Activated CD4-positive, alpha-beta memory T cell treated with anti-CD3 and anti-CD28 coated beads, Interleukin-2, amount 10 ng/mL, durations not matched to agents 7 days and 5 days (primary cell): ENCODE measurements at regions of chr7 and their contacts with region 1.

Region 1: DNA sequence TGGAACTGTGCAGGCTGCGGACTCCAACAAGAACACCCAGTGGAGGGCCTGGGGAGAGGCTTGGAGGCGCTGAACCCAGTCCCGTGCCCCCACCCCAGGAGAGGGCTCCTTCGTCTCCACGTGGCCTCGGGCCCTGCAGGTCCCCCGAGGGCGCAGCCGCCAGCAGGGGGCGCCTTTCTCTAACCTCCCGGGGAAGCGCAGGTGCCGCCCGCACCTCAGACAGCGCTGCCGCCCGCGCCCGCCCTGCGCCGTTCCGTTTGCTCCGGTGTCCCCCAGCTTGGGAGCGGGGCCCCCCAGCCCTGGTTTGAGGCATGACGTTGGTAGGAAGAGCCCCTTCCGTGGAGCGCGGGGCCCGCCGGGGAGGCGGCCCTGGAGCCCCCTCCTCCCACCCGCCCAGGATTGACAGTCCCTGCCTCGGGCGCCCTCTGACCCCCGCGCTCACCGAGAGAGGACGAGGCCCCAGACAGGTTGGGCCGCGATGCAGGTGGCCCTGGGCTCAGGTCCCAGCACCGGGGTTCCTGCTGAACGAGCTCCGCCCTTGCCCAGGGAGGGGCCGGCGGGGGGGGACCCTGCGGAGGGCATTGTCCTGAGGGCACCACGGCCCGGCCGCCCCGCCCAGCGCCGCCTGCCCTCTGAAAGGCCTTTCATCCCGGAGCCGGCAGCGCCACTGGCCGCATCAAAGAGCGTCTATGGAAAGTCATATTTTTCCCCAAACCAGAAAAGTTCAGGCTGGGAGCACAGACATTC is 42.8 kb downstream of the FOXL3 start:
- DNase-seq: peak; percentile 82
- H3K4me3 Mint-ChIP-seq: no peak overlapping the region
- H3K27ac Mint-ChIP-seq: no peak overlapping the region
- H3K4me1 Mint-ChIP-seq: peaks cover 6% of the 10 kb centered on the region
- H3K27me3 Mint-ChIP-seq: peaks cover 5% of the 10 kb centered on the region

Region 2: DNA sequence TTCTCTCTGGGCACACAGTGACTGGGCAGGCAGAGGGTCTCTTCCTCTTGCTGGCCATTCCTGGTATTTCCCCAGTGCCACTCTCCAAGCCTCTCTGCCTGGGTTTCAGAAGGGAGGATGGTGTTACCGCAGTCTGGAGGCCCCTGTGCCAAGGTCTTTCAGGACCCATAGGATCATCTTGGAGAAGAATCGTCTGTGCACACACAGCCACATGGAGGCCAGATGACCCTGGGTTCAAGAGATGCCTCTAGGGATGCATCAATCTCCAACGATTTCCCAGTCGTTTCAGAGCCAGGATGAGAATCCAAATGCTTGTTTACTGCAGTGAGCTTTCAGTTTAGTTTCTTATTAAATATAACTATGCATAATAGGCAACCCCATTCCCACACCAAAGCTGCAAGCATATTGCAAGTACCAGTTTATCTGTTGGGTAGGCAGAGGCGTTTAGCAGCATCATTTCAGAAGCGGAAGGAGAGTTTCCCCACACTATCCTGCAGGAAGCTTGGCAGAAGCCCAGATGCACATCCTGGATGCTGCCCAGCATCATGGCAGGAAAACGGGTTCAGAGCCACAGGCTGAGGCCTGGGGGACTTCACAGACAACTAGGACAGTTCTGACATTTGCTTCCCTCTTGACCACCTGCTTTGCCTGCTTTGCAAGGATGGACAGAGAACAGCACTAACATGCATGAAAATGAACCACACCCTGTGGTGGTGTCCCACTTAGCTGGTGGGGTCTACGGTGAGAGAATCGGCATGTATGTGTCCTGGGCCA is 275.1 kb before region 1 on chr7:
- CTCF ChIA-PET with region 1: no interaction called
- POLR2A ChIA-PET with region 1: no interaction called
- DNase-seq: no peak
- H3K4me3 Mint-ChIP-seq: no peak overlapping the region
- H3K27ac Mint-ChIP-seq: no peak overlapping the region
- H3K4me1 Mint-ChIP-seq: no peaks in the 10 kb centered on the region
- H3K27me3 Mint-ChIP-seq: no peaks in the 10 kb centered on the region

Region 3: GRCh38 chr7:437329-438251 is 104.8 kb after region 1 on chr7:
- CTCF ChIA-PET with region 1: no interaction called
- POLR2A ChIA-PET with region 1: no interaction called
- DNase-seq: no peak
- H3K4me3 Mint-ChIP-seq: no peak overlapping the region
- H3K27ac Mint-ChIP-seq: no peak overlapping the region
- H3K4me1 Mint-ChIP-seq: no peaks in the 10 kb centered on the region
- H3K27me3 Mint-ChIP-seq: no peaks in the 10 kb centered on the region

Region 4: GRCh38 chr7:732094-732541 is 399.3 kb after region 1 on chr7:
- CTCF ChIA-PET with region 1: interaction called, 11 read pairs
- POLR2A ChIA-PET with region 1: no interaction called
- DNase-seq: no peak
- H3K4me3 Mint-ChIP-seq: no peak overlapping the region
- H3K27ac Mint-ChIP-seq: no peak overlapping the region
- H3K4me1 Mint-ChIP-seq: peaks cover 14% of the 10 kb centered on the region
- H3K27me3 Mint-ChIP-seq: no peaks in the 10 kb centered on the region